AG04450 (cell line): ENCODE measurements at regions of chr1 and their contacts with region 1.

Region 1: DNA sequence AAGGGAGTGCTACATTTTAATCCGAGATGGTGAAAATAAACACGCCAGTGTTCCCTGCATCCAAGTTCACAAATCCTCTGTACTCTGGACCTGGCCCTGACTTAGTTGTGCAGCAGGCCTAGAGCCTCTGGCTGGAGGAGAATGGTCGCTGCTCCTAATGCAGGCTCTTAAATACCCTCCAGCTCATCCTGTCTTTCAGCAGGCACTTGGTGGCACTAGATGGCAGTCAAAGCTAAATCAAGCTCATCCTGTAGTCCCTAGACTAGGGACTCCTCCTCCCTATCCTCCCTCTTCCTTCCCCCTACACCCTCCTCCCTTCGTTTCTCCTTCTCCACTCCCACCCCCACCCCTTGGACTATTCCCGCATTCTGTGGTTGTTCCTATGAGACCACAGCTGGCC is 41.6 kb upstream of the MTR start:
- DNase-seq: no peak
- H3K4me3 ChIP-seq: no peak overlapping the region
- H3K27ac ChIP-seq: no peak overlapping the region
- H3K27me3 ChIP-seq: no peaks in the 10 kb centered on the region
- CTCF ChIP-seq: peak; percentile 26; the same call in 1 of the 2 replicates

Region 2: GRCh38 chr1:236568285-236568894 is 185.1 kb before region 1 on chr1:
- CTCF ChIA-PET with region 1: no interaction called
- POLR2A ChIA-PET with region 1: no interaction called
- DNase-seq: no peak
- H3K4me3 ChIP-seq: no peak overlapping the region
- H3K27ac ChIP-seq: no peak overlapping the region
- H3K27me3 ChIP-seq: no peaks in the 10 kb centered on the region
- CTCF ChIP-seq: no peak

Region 3: GRCh38 chr1:236636017-236636416 is 117.5 kb before region 1 on chr1:
- CTCF ChIA-PET with region 1: no interaction called
- POLR2A ChIA-PET with region 1: no interaction called
- DNase-seq: no peak
- H3K4me3 ChIP-seq: no peak overlapping the region
- H3K27ac ChIP-seq: no peak overlapping the region
- H3K27me3 ChIP-seq: no peaks in the 10 kb centered on the region
- CTCF ChIP-seq: no peak

Region 4: DNA sequence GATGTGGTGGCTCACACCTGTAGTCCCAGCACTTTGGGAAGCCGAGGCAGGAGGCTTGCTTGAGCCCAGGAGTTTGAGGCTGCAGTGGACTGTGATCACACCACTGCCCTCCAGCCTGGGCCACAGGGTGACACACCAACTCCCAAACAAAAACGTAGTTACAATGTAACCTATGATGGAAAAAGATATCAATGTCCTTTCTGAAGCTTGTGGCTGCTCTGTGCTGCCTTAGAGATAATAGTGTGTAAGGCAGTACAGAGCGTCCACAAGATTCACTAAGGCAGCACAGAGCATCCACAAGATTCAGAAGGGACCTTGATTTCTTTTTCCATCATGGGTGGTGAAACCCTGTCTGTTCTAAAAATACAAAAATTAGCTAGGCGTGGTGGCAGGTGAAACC is 24.8 kb before region 1 on chr1:
- CTCF ChIA-PET with region 1: no interaction called
- POLR2A ChIA-PET with region 1: no interaction called
- DNase-seq: no peak
- H3K4me3 ChIP-seq: no peak overlapping the region
- H3K27ac ChIP-seq: no peak overlapping the region
- H3K27me3 ChIP-seq: no peaks in the 10 kb centered on the region
- CTCF ChIP-seq: no peak

Region 5: GRCh38 chr1:237386362-237387143 is 633.0 kb after region 1 on chr1:
- CTCF ChIA-PET with region 1: interaction called, 39 read pairs
- POLR2A ChIA-PET with region 1: no interaction called
- DNase-seq: no peak
- H3K4me3 ChIP-seq: no peak overlapping the region
- H3K27ac ChIP-seq: no peak overlapping the region
- H3K27me3 ChIP-seq: no peaks in the 10 kb centered on the region
- CTCF ChIP-seq: peak; percentile 75